Heart left ventricle (tissue), 16 donors: ENCODE measurements at regions of chr9 and their contacts with region 1.

Region 1: GRCh38 chr9:19431361-19432171 is 22.8 kb downstream of the ACER2 start:
- DNase-seq: peak; percentile 45 to 86 (median 72)
- ATAC-seq: peak; percentile 80 to 94 (median 88)
- H3K4me3 ChIP-seq: peak overlapping the region in 1 of 12 donors; percentile 7
- H3K27ac ChIP-seq: peak overlapping the region; percentile 40 to 82 (median 68)
- H3K4me1 ChIP-seq: peaks cover 0 to 34% (median 20%) of the 10 kb centered on the region in 12 donors
- H3K27me3 ChIP-seq: no peaks in the 10 kb centered on the region
- CTCF ChIP-seq: no peak
- POLR2A ChIP-seq: no peak

Region 2: GRCh38 chr9:19408693-19409400 is 22.7 kb before region 1 on chr9 and contains the start of gene ACER2:
- intact Hi-C with region 1: loop called in 1 of 10 experiments (anchors 2 kb)
- DNase-seq: peak; percentile 96 to 99 (median 97)
- ATAC-seq: peak; percentile 97 to 99 (median 98)
- H3K4me3 ChIP-seq: peak within 1 kb of the TSS; percentile 65 to 98 (median 89)
- H3K27ac ChIP-seq: peak within 1 kb of the TSS; percentile 83 to 96 (median 88)
- H3K4me1 ChIP-seq: peaks cover 0 to 26% (median 22%) of the 10 kb centered on the region in 12 donors
- H3K27me3 ChIP-seq: no peaks in the 10 kb centered on the region
- CTCF ChIP-seq: peak in 4 of 12 donors; percentile 8 to 22 (median 13)
- POLR2A ChIP-seq: peak; percentile 70 to 96
- total RNA-seq, gene ACER2: 1.6 to 4.5 (median 3.9) TPM

Region 3: DNA sequence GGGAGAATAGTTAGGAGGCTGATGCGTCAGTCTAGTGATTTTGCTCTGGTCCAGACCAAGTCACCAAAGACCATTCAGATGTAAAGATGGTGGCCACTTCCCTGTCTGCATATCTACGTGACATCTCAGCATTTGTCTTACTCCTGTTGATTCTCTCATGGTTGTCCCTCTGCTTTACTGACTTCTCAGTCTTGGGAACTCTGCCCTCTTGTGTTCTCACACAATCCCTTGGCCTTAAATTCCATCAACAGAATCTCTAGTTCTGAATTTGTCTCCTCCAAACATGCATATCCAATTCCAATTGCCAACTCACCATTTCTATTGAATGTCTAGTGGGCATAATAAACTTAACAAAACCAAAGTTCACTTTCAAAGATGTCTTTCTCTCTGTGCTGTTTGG is 209.5 kb after region 1 on chr9:
- intact Hi-C with region 1: no loop called
- DNase-seq: no peak
- ATAC-seq: no peak
- H3K4me3 ChIP-seq: no peak overlapping the region
- H3K27ac ChIP-seq: no peak overlapping the region
- H3K4me1 ChIP-seq: no peaks in the 10 kb centered on the region
- H3K27me3 ChIP-seq: no peaks in the 10 kb centered on the region
- CTCF ChIP-seq: no peak
- POLR2A ChIP-seq: no peak